ENCODE measurements at regions of chr9 and their contacts with region 1.

Region 1: GRCh38 chr9:136482793-136483588 is at the start of gene SEC16A:
- DNase-seq: peak; percentile 98 to 100 (median 99)
- ATAC-seq: peak; percentile 75
- H3K4me3 ChIP-seq: peak within 1 kb of the TSS; percentile 72 to 97
- H3K4me3 Mint-ChIP-seq: peak within 1 kb of the TSS; percentile 98
- H3K27ac ChIP-seq: peak within 1 kb of the TSS; percentile 97 to 99
- H3K27ac Mint-ChIP-seq: peak within 1 kb of the TSS; percentile 99
- H3K4me1 ChIP-seq: peaks cover 29% of the 10 kb centered on the region
- H3K4me1 Mint-ChIP-seq: peaks cover 37% of the 10 kb centered on the region
- H3K27me3 ChIP-seq: no peaks in the 10 kb centered on the region
- H3K27me3 Mint-ChIP-seq: no peaks in the 10 kb centered on the region
- CTCF ChIP-seq: no peak
- total RNA-seq, gene SEC16A: 81.0 to 83.5 TPM

Region 2: GRCh38 chr9:136170006-136170901 is 312.7 kb before region 1 on chr9:
- CTCF ChIA-PET with region 1: no interaction called
- POLR2A ChIA-PET with region 1: no interaction called
- intact Hi-C with region 1: no loop called
- DNase-seq: peak in 8 of 9 experiments; percentile 15 to 60 (median 40)
- ATAC-seq: no peak
- H3K4me3 ChIP-seq: no peak overlapping the region
- H3K4me3 Mint-ChIP-seq: no peak overlapping the region
- H3K27ac ChIP-seq: no peak overlapping the region
- H3K27ac Mint-ChIP-seq: no peak overlapping the region
- H3K4me1 ChIP-seq: no peaks in the 10 kb centered on the region
- H3K4me1 Mint-ChIP-seq: no peaks in the 10 kb centered on the region
- H3K27me3 ChIP-seq: no peaks in the 10 kb centered on the region
- H3K27me3 Mint-ChIP-seq: peaks cover 19% of the 10 kb centered on the region
- CTCF ChIP-seq: peak; percentile 41

Region 3: DNA sequence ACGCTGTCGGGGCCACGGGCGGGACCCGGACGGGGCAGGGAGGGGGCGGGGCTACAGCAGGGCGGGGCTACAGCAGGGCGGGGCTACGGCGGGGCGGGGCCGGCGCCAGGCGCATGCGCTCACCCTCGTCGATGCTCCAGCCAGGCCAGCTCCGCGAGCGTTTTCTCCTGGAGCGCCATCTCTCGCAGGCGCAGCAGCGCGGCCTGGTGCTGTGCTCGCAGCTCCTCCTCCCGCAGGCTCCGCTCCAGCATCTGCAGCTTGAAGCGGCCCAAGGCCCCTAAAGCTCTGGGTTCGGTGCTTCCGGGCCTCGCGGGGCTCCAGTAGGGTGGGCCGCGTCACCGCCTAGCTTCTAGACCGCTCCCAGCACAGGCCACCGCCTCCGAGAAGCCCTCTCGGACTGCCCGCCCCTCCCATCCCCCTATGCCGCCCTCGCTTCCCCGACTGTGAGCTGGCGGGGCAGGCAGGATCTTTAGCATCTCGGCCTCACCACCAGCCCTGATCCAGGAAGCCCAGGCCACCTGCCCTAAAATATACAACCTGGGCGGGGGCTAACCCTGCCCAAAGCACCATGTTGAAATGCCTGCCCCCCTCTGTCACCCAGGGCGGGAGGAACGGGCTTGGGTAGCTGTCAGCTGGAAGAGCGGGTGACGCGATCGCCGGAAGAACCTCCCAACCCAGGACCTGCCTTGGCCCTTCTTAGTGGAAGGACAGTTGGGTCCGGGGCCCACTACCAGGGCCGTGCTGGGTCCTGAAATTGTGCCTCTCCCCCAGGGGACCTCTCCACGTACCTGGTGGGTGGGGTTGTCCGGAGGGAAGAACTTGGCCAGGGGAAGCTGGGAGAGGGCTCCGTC is 215.5 kb before region 1 on chr9:
- CTCF ChIA-PET with region 1: no interaction called
- POLR2A ChIA-PET with region 1: no interaction called
- intact Hi-C with region 1: loop called in 1 of 2 experiments (anchors 1 kb)
- DNase-seq: peak; percentile 74 to 94 (median 85)
- ATAC-seq: peak; percentile 98
- H3K4me3 ChIP-seq: peak overlapping the region; percentile 74 to 80
- H3K4me3 Mint-ChIP-seq: peak overlapping the region; percentile 81
- H3K27ac ChIP-seq: peak overlapping the region; percentile 51 to 58
- H3K27ac Mint-ChIP-seq: peak overlapping the region; percentile 58
- H3K4me1 ChIP-seq: peaks cover 6% of the 10 kb centered on the region
- H3K4me1 Mint-ChIP-seq: peaks cover 6% of the 10 kb centered on the region
- H3K27me3 ChIP-seq: peaks cover 0 to 2% of the 10 kb centered on the region in 2 experiments
- H3K27me3 Mint-ChIP-seq: no peaks in the 10 kb centered on the region
- CTCF ChIP-seq: peak; percentile 18

Region 4: GRCh38 chr9:136439550-136440408 is 43.2 kb before region 1 on chr9 and contains the start of gene INPP5E:
- CTCF ChIA-PET with region 1: no interaction called
- POLR2A ChIA-PET with region 1: no interaction called
- intact Hi-C with region 1: loop called (anchors 1 to 2 kb)
- DNase-seq: peak; percentile 72 to 94 (median 82)
- ATAC-seq: peak; percentile 82
- H3K4me3 ChIP-seq: peak within 1 kb of the TSS; percentile 56 to 68
- H3K4me3 Mint-ChIP-seq: peak within 1 kb of the TSS; percentile 83
- H3K27ac ChIP-seq: peak within 1 kb of the TSS; percentile 25 to 42
- H3K27ac Mint-ChIP-seq: peak within 1 kb of the TSS; percentile 37
- H3K4me1 ChIP-seq: peaks cover 27% of the 10 kb centered on the region
- H3K4me1 Mint-ChIP-seq: peaks cover 26% of the 10 kb centered on the region
- H3K27me3 ChIP-seq: no peaks in the 10 kb centered on the region
- H3K27me3 Mint-ChIP-seq: no peaks in the 10 kb centered on the region
- CTCF ChIP-seq: peak; percentile 60
- total RNA-seq, gene INPP5E: 11.4 to 12.7 TPM

Region 5: DNA sequence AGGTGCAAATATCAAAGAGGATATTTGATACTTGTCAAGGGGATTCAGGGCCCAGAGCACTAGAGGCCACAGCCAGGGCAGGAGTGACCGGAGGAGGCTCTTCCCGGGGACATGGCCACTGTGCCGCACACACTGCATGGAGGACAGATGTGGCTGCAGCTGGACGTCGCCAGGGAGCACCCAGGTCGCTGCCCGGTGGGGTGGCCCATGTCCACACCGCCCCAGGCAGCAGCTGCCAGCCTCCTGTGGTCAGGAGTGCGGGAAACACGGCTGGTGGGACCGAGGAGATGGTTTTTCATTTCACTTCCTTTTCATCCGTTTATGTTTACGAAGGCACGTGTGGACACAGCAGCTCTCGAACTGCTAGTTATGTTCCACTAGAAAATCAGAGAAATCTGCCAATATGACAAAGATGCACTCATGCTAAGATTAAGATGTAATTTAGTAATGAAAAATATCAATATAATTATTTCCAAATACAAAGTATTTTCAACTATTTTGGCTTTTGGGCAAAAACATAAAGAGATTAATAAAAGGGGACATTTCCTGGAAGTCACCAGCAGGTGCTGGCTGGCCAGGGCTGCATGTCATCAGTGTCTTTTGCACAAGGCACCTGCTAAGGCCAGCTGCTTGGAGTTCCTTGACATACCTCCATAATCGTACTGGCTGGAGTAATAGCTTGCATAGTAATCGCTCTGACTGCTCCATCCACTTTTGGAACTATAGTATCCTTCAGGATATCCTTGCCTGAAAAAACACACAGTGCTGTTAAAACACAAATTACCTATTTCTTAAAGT is 15.0 kb before region 1 on chr9:
- CTCF ChIA-PET with region 1: no interaction called
- POLR2A ChIA-PET with region 1: no interaction called
- intact Hi-C with region 1: no loop called
- DNase-seq: no peak
- ATAC-seq: no peak
- H3K4me3 ChIP-seq: no peak overlapping the region
- H3K4me3 Mint-ChIP-seq: no peak overlapping the region
- H3K27ac ChIP-seq: no peak overlapping the region
- H3K27ac Mint-ChIP-seq: no peak overlapping the region
- H3K4me1 ChIP-seq: no peaks in the 10 kb centered on the region
- H3K4me1 Mint-ChIP-seq: no peaks in the 10 kb centered on the region
- H3K27me3 ChIP-seq: no peaks in the 10 kb centered on the region
- H3K27me3 Mint-ChIP-seq: no peaks in the 10 kb centered on the region
- CTCF ChIP-seq: no peak

Region 6: GRCh38 chr9:136631038-136632000 is 148.3 kb after region 1 on chr9:
- CTCF ChIA-PET with region 1: interaction called, 181 read pairs
- POLR2A ChIA-PET with region 1: interaction called, 4 read pairs
- intact Hi-C with region 1: loop called (anchors 1 kb)
- DNase-seq: peak; percentile 63 to 89 (median 83)
- ATAC-seq: peak; percentile 89
- H3K4me3 ChIP-seq: no peak overlapping the region
- H3K4me3 Mint-ChIP-seq: no peak overlapping the region
- H3K27ac ChIP-seq: peak overlapping the region in 1 of 2 experiments; percentile 40
- H3K27ac Mint-ChIP-seq: no peak overlapping the region
- H3K4me1 ChIP-seq: peaks cover 12% of the 10 kb centered on the region
- H3K4me1 Mint-ChIP-seq: no peaks in the 10 kb centered on the region
- H3K27me3 ChIP-seq: peaks cover 0 to 2% of the 10 kb centered on the region in 2 experiments
- H3K27me3 Mint-ChIP-seq: peaks cover 3% of the 10 kb centered on the region
- CTCF ChIP-seq: peak; percentile 81

Region 7: GRCh38 chr9:136711751-136712689 is 229.0 kb after region 1 on chr9 and contains the start of gene DIPK1B:
- CTCF ChIA-PET with region 1: no interaction called
- POLR2A ChIA-PET with region 1: no interaction called
- intact Hi-C with region 1: no loop called
- DNase-seq: peak in 2 of 9 experiments; percentile 22 to 40
- ATAC-seq: peak; percentile 45
- H3K4me3 ChIP-seq: peak within 1 kb of the TSS in 1 of 2 experiments; percentile 15
- H3K4me3 Mint-ChIP-seq: peak within 1 kb of the TSS; percentile 67
- H3K27ac ChIP-seq: no peak within 1 kb of the TSS
- H3K27ac Mint-ChIP-seq: no peak within 1 kb of the TSS
- H3K4me1 ChIP-seq: peaks cover 7% of the 10 kb centered on the region
- H3K4me1 Mint-ChIP-seq: peaks cover 6% of the 10 kb centered on the region
- H3K27me3 ChIP-seq: peaks cover 10 to 29% of the 10 kb centered on the region in 2 experiments
- H3K27me3 Mint-ChIP-seq: peaks cover 31% of the 10 kb centered on the region
- CTCF ChIP-seq: no peak
- total RNA-seq, gene DIPK1B: 0.22 to 0.62 TPM

Region 8: GRCh38 chr9:136728080-136728547 is 245.1 kb after region 1 on chr9:
- CTCF ChIA-PET with region 1: no interaction called
- POLR2A ChIA-PET with region 1: interaction called, 3 read pairs
- intact Hi-C with region 1: loop called (anchors 1 to 2 kb)
- DNase-seq: peak; percentile 86 to 97 (median 92)
- ATAC-seq: peak; percentile 80
- H3K4me3 ChIP-seq: peak overlapping the region; percentile 66 to 96
- H3K4me3 Mint-ChIP-seq: peak overlapping the region; percentile 92
- H3K27ac ChIP-seq: peak overlapping the region in 1 of 2 experiments; percentile 84
- H3K27ac Mint-ChIP-seq: peak overlapping the region; percentile 45
- H3K4me1 ChIP-seq: peaks cover 30% of the 10 kb centered on the region
- H3K4me1 Mint-ChIP-seq: peaks cover 25% of the 10 kb centered on the region
- H3K27me3 ChIP-seq: no peaks in the 10 kb centered on the region
- H3K27me3 Mint-ChIP-seq: no peaks in the 10 kb centered on the region
- CTCF ChIP-seq: peak; percentile 93

Region 9: DNA sequence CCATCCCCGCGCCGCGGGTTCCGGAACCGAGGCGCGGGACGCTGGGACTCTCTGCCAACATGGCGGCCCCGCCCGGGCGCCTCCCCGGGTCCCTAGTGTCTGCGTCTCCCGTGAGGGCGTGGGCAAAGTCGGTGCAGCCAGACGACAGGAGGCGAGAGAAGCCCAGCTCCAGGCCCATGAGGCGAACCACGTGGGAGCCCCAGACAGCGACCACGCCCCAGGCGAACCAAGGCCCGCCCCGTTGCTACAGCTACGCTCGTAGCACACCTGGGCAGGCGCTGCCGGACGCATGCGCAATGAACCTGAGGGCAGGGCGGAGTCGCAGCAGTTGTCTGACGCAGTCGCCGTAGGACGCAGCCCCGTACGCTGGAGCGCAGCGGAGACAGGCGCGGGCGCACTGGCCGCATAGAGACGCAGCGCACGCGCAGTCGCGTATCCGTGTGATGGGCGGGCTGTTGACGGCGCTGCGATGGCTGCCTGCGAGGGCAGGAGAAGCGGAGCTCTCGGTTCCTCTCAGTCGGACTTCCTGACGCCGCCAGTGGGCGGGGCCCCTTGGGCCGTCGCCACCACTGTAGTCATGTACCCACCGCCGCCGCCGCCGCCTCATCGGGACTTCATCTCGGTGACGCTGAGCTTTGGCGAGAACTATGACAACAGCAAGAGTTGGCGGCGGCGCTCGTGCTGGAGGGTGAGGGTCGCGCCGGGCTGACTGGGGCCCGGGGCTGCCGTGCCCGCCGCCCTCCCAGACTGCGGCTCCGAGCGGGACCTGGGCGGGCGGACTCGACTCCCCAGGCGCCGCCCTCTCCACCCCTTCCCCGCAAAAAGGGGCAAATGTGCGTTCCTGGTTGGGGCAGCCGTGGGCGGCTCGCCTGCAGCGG is 603.8 kb after region 1 on chr9 and contains the start of gene MAN1B1:
- CTCF ChIA-PET with region 1: interaction called, 4 read pairs
- POLR2A ChIA-PET with region 1: no interaction called
- intact Hi-C with region 1: loop called in 1 of 2 experiments (anchors 5 kb)
- DNase-seq: peak; percentile 98 to 100 (median 99)
- ATAC-seq: peak; percentile 84
- H3K4me3 ChIP-seq: peak within 1 kb of the TSS; percentile 76 to 88
- H3K4me3 Mint-ChIP-seq: peak within 1 kb of the TSS; percentile 88
- H3K27ac ChIP-seq: peak within 1 kb of the TSS; percentile 84 to 90
- H3K27ac Mint-ChIP-seq: peak within 1 kb of the TSS; percentile 95
- H3K4me1 ChIP-seq: peaks cover 24% of the 10 kb centered on the region
- H3K4me1 Mint-ChIP-seq: peaks cover 23% of the 10 kb centered on the region
- H3K27me3 ChIP-seq: no peaks in the 10 kb centered on the region
- H3K27me3 Mint-ChIP-seq: no peaks in the 10 kb centered on the region
- CTCF ChIP-seq: no peak
- total RNA-seq, gene MAN1B1: 60.3 to 62.9 TPM

Region 10: DNA sequence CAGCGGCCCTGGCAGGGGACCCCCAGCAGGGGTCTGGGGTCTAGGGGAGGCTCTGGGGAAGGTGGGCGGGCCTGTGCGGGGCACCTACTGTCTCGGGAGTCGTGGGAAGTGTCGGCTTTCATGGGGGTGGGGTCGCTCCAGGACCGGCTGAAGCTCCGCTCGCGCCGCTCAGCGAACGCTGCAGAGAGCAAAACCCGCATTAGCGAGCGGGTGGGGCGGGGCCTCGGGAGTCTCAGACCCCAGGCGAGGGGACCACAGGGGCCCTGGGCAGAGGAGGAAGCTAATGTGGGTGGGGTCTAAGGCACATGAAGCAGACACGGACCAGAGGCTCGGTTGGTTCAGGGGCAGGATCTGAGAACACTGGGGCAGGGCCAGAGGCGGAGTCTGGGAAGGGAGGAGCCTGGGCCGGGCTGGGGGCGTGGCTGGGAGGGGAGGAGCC is 970.7 kb after region 1 on chr9:
- CTCF ChIA-PET with region 1: no interaction called
- POLR2A ChIA-PET with region 1: no interaction called
- intact Hi-C with region 1: loop called in 1 of 2 experiments (anchors 5 kb)
- DNase-seq: peak in 7 of 9 experiments; percentile 1 to 67 (median 56)
- ATAC-seq: peak; percentile 63
- H3K4me3 ChIP-seq: no peak overlapping the region
- H3K4me3 Mint-ChIP-seq: no peak overlapping the region
- H3K27ac ChIP-seq: no peak overlapping the region
- H3K27ac Mint-ChIP-seq: peak overlapping the region; percentile 18
- H3K4me1 ChIP-seq: peaks cover 57% of the 10 kb centered on the region
- H3K4me1 Mint-ChIP-seq: peaks cover 37% of the 10 kb centered on the region
- H3K27me3 ChIP-seq: no peaks in the 10 kb centered on the region
- H3K27me3 Mint-ChIP-seq: no peaks in the 10 kb centered on the region
- CTCF ChIP-seq: no peak

Measured in CD8-positive, alpha-beta T cell (primary cell).